ENCODE measurements at regions of chr6 and their contacts with region 1.

Region 1: DNA sequence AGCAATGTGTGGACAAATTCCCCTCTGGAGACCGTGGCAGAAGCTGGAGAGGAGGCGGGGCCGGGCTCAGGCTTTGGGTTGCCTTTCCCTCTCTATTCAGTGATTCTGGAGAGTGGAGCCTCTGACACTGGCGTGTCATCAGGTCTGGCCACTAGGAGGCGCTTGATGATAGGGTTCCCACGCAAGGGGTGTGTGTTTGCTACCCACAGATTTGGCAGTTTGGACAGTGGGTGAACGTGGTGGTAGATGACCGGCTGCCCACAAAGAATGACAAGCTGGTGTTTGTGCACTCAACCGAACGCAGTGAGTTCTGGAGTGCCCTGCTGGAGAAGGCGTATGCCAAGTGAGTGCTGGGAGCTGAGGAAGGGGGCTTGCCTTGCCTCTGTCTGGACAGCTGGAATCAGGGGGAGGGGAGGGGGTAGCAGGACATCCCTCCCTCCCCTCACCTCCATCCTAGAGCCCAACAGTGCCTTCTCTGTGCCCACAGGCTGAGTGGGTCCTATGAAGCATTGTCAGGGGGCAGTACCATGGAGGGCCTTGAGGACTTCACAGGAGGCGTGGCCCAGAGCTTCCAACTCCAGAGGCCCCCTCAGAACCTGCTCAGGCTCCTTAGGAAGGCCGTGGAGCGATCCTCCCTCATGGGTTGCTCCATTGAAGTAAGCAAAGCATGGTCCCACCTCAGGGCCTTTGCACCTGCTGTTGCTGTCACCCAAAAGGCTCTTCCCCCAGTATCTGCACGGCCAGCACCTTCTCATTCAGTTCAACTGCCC is 14.3 kb downstream of the CAPN11 start:
- DNase-seq: peak; percentile 88
- H3K4me3 ChIP-seq: no peak overlapping the region
- H3K27ac ChIP-seq: no peak overlapping the region
- H3K4me1 ChIP-seq: peaks cover 0 to 4% of the 10 kb centered on the region in 2 experiments; a peak in 1 of 4 replicates
- H3K27me3 ChIP-seq: no peaks in the 10 kb centered on the region
- CTCF ChIP-seq: peak; percentile 90
- EP300 ChIP-seq: no peak
- RAD21 ChIP-seq: peak; percentile 95

Region 2: GRCh38 chr6:44156494-44157151 is 16.3 kb before region 1 on chr6:
- CTCF ChIA-PET with region 1: interaction called, 33 read pairs
- POLR2A ChIA-PET with region 1: no interaction called
- DNase-seq: no peak
- H3K4me3 ChIP-seq: no peak overlapping the region
- H3K27ac ChIP-seq: no peak overlapping the region
- H3K4me1 ChIP-seq: peaks cover 0 to 2% of the 10 kb centered on the region in 2 experiments; a peak in 1 of 4 replicates
- H3K27me3 ChIP-seq: no peaks in the 10 kb centered on the region
- CTCF ChIP-seq: no peak
- EP300 ChIP-seq: no peak
- RAD21 ChIP-seq: no peak

Region 3: GRCh38 chr6:44192428-44193041 is 19.6 kb after region 1 on chr6:
- CTCF ChIA-PET with region 1: interaction called, 31 read pairs
- POLR2A ChIA-PET with region 1: no interaction called
- DNase-seq: no peak
- H3K4me3 ChIP-seq: no peak overlapping the region
- H3K27ac ChIP-seq: no peak overlapping the region
- H3K4me1 ChIP-seq: no peaks in the 10 kb centered on the region; a peak in 1 of 4 replicates
- H3K27me3 ChIP-seq: no peaks in the 10 kb centered on the region; the same call in 1 of the 2 replicates
- CTCF ChIP-seq: no peak
- EP300 ChIP-seq: no peak
- RAD21 ChIP-seq: no peak

Region 4: DNA sequence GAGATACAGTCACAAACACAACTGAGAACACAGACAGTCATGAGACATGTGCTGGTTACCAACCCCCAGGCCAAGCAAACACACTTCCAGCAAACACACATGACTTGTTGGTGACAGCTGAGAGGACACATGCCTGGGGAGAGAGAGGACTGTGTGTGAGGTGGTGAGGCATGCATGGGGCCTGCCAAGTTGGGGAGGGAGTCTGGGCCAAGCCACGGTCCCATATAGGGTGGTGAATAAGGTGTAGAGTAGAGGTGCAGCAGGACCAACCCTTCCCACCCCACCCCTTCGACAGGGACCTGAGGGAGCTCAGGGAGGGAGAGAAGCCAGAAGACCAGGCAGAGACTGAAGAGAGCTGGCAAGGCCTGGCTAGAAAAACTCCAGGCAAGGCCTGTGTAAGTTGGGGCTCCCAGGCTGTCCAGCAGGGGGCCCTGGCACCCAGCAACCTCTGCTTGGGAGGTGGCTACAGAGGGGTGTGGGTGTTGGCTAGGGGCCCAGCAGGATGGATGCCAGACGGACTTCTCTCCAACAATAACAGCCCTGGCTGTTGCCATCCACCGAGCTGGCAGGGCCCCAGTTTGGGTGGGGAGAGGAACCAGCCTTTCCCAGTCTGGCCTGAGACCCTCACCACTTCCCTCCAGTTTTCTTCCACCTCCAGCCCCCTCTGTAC is 48.5 kb after region 1 on chr6:
- CTCF ChIA-PET with region 1: interaction called, 25 read pairs
- POLR2A ChIA-PET with region 1: interaction called, 3 read pairs
- DNase-seq: peak; percentile 90
- H3K4me3 ChIP-seq: no peak overlapping the region; a peak in 1 of 4 replicates
- H3K27ac ChIP-seq: peak overlapping the region; percentile 52 to 98
- H3K4me1 ChIP-seq: peaks cover 17 to 65% of the 10 kb centered on the region in 2 experiments
- H3K27me3 ChIP-seq: no peaks in the 10 kb centered on the region
- CTCF ChIP-seq: peak; percentile 83
- EP300 ChIP-seq: no peak
- RAD21 ChIP-seq: peak; percentile 76

Region 5: GRCh38 chr6:44257025-44257752 is 84.3 kb after region 1 on chr6 and contains the start of gene SLC35B2:
- CTCF ChIA-PET with region 1: interaction called, 34 read pairs
- POLR2A ChIA-PET with region 1: no interaction called
- DNase-seq: peak; percentile 95
- H3K4me3 ChIP-seq: peak within 1 kb of the TSS; percentile 94 to 96
- H3K27ac ChIP-seq: peak within 1 kb of the TSS; percentile 73 to 91
- H3K4me1 ChIP-seq: peaks cover 0 to 37% of the 10 kb centered on the region in 2 experiments; a peak in 1 of 4 replicates
- H3K27me3 ChIP-seq: no peaks in the 10 kb centered on the region
- CTCF ChIP-seq: peak; percentile 67
- EP300 ChIP-seq: no peak
- RAD21 ChIP-seq: no peak
- polyA plus RNA-seq, gene SLC35B2: 125 and 163 TPM in 2 replicates

Region 6: DNA sequence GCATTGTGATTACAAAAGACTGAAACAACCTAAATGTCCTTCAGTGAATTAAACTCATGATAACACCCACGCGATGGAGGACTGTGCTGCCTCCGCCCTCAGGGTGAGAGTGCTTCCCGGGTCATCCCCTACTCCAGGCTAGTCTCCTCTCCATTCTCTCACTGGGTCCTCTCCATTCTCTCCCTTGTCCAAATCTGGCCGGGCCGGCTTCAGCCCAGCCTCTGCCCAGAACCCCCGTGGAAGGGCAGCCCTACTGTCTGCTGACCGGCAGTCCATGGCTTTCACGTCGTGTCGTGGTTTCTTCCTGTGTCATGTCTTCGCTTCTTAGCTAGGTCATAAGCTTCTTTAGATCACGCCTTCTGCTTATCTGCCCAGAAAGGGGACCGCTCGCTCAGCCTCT is 289.4 kb after region 1 on chr6:
- CTCF ChIA-PET with region 1: no interaction called
- POLR2A ChIA-PET with region 1: no interaction called
- DNase-seq: no peak
- H3K4me3 ChIP-seq: no peak overlapping the region
- H3K27ac ChIP-seq: no peak overlapping the region
- H3K4me1 ChIP-seq: no peaks in the 10 kb centered on the region
- H3K27me3 ChIP-seq: no peaks in the 10 kb centered on the region
- CTCF ChIP-seq: no peak
- EP300 ChIP-seq: no peak
- RAD21 ChIP-seq: no peak

Measured in SK-N-SH (cell line).